ENCODE measurements at regions of chr9 and their contacts with region 1.

Region 1: DNA sequence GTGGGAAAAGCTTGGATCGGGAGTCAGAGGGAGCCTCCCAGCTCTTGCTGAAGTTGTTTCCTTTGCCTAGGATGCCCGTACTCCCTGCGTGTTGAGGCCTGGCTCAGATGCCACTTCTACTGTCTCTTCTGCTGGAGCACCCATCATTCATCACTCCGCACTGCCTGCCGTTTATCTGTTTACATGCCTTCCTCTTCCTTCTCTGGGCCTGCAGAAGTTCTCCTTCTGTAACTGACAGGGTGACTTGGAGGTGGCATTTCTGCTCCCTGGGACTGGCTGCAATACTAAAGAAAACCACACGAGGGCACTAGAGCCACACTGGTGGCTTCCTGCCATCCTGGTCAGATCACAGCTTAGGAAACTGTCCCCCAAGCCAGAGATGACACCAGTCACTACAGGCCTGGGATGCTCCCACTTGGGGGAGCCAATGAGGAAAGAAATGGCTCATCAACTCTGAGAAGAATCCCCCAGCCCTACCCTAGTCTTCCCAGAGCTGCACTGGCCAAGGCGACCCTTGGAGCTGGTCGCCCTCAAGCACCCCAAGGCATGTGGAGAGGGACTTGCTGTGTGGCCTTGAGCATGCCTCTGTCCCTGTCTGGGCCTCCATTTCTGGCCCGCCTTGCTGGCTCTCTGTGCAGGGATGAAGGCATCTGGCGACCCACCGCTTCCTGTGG is 9.7 kb upstream of the SLC25A51 start:
- DNase-seq: peak; percentile 86
- ATAC-seq: peak; percentile 76
- H3K4me3 ChIP-seq: no peak overlapping the region
- H3K27ac ChIP-seq: peak overlapping the region; percentile 52
- H3K4me1 ChIP-seq: peaks cover 7% of the 10 kb centered on the region
- H3K27me3 ChIP-seq: no peaks in the 10 kb centered on the region
- CTCF ChIP-seq: peak; percentile 93

Region 2: DNA sequence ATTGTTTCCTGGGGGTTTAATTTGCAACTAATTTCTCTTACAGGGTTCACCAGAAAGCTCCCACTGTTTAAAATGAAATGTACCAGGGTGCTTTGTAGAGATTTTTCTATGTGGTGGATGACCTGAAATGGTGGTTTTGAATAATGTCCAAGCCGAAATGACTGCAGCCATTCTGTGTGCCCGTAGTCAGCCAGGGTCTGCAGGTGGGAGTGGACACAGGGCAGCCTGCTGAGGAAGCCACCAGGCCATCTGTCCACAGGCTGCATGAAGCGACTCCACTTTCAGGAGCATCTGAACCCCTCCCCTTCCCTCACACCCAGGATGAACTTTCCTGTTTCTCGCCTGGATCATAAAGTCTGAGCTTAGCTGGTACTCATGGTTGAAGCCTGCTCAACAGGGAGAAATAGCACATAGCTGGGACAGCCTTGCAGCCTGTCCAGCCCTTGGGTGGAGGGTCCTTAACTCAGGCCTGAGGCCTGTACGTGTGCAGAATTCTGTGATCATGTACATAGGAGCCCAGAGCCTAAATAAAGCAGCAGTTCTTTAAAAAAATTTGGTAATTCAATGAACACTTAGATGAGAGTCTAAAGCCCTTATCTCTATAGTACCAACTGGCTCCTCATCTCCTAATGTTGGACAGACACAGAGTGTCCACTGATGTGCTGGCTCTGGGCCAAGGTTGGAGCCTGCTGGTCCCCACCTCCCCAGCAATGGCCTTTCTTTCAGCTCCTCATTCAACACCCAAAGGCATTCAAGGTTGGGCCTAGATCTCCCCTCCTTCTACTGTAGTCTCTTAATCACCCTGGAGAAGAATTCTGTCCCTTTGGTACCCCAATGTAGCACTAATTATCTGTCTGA is 82.6 kb after region 1 on chr9:
- CTCF ChIA-PET with region 1: interaction called, 10 read pairs
- POLR2A ChIA-PET with region 1: no interaction called
- intact Hi-C with region 1: no loop called
- DNase-seq: no peak
- ATAC-seq: no peak
- H3K4me3 ChIP-seq: no peak overlapping the region
- H3K27ac ChIP-seq: no peak overlapping the region
- H3K4me1 ChIP-seq: peaks cover 30% of the 10 kb centered on the region
- H3K27me3 ChIP-seq: no peaks in the 10 kb centered on the region
- CTCF ChIP-seq: no peak

Region 3: DNA sequence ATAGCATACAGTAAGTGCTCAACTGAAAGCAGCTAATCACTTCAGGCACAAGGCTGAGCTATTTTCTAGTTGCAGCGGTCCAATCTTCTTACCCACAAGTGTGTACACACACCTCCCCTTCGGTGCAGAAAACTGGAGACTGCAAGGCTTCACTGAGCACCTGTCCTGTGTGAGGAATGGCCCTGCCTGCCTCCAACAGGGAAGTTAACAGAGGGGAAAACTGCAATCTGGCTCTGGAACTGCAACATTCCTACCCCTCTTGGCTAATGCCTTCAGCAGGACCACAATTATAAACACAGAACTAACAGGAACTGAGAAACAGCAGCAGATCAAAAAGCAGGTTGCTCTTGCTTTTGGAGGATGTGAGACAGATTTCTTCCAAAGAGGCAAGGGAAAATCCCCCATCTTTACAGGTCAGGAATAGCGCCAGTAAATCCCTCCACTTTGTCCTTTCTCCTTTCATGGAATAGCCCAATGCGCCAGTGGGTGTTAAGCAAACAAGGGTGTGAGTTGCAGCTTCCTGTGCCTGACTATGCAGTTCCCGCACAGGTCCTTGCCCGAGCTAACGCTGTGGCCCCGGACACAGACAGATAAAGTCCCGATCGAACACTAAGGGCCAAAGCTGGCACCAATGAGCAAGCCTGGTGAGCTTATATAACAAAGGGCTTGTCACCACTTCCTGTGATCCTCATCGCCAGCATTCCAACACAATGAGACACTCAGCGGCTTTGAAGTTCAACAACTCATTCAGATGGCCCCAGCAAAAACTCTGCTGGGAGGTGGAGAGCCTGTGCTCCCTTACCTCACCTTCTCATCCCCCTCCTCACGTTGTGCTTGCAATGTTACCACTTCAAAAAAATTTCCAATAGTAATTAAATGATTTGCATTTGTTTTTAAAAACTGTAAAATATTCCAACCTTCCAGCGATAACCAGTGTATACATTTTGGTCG is 134.0 kb after region 1 on chr9:
- CTCF ChIA-PET with region 1: interaction called, 19 read pairs
- POLR2A ChIA-PET with region 1: no interaction called
- intact Hi-C with region 1: no loop called
- DNase-seq: peak; percentile 96
- ATAC-seq: peak; percentile 81
- H3K4me3 ChIP-seq: peak overlapping the region; percentile 58
- H3K27ac ChIP-seq: peak overlapping the region; percentile 99
- H3K4me1 ChIP-seq: peaks cover 52% of the 10 kb centered on the region
- H3K27me3 ChIP-seq: no peaks in the 10 kb centered on the region
- CTCF ChIP-seq: no peak

Region 4: GRCh38 chr9:38088006-38088925 is 174.6 kb after region 1 on chr9:
- CTCF ChIA-PET with region 1: no interaction called
- POLR2A ChIA-PET with region 1: no interaction called
- intact Hi-C with region 1: loop called (anchors 5 kb)
- DNase-seq: peak; percentile 59
- ATAC-seq: peak; percentile 31; the same call in 1 of the 2 replicates
- H3K4me3 ChIP-seq: no peak overlapping the region
- H3K27ac ChIP-seq: no peak overlapping the region
- H3K4me1 ChIP-seq: peaks cover 5% of the 10 kb centered on the region; the same call in 1 of the 2 replicates
- H3K27me3 ChIP-seq: no peaks in the 10 kb centered on the region
- CTCF ChIP-seq: peak; percentile 89

Region 5: GRCh38 chr9:38362852-38363593 is 449.4 kb after region 1 on chr9:
- CTCF ChIA-PET with region 1: no interaction called
- POLR2A ChIA-PET with region 1: no interaction called
- intact Hi-C with region 1: loop called (anchors 2 kb)
- DNase-seq: peak; percentile 86
- ATAC-seq: peak; percentile 81
- H3K4me3 ChIP-seq: 0 out of 2 replicates have a peak overlapping the region, but pooled peaks have one; percentile 32
- H3K27ac ChIP-seq: no peak overlapping the region
- H3K4me1 ChIP-seq: peaks cover 4% of the 10 kb centered on the region; the same call in 1 of the 2 replicates
- H3K27me3 ChIP-seq: no peaks in the 10 kb centered on the region
- CTCF ChIP-seq: peak; percentile 78

Measured in PC-3 (cell line).